ENCODE measurements at regions of chr1 and their contacts with region 1.

Region 1: GRCh38 chr1:39408641-39409054 is 82.8 kb upstream of the BMP8A start:
- DNase-seq: peak; percentile 89
- ATAC-seq: peak; percentile 79
- H3K4me3 Mint-ChIP-seq: peak overlapping the region; percentile 80
- H3K27ac Mint-ChIP-seq: no peak overlapping the region
- H3K4me1 Mint-ChIP-seq: peaks cover 63% of the 10 kb centered on the region
- H3K27me3 Mint-ChIP-seq: no peaks in the 10 kb centered on the region

Region 2: DNA sequence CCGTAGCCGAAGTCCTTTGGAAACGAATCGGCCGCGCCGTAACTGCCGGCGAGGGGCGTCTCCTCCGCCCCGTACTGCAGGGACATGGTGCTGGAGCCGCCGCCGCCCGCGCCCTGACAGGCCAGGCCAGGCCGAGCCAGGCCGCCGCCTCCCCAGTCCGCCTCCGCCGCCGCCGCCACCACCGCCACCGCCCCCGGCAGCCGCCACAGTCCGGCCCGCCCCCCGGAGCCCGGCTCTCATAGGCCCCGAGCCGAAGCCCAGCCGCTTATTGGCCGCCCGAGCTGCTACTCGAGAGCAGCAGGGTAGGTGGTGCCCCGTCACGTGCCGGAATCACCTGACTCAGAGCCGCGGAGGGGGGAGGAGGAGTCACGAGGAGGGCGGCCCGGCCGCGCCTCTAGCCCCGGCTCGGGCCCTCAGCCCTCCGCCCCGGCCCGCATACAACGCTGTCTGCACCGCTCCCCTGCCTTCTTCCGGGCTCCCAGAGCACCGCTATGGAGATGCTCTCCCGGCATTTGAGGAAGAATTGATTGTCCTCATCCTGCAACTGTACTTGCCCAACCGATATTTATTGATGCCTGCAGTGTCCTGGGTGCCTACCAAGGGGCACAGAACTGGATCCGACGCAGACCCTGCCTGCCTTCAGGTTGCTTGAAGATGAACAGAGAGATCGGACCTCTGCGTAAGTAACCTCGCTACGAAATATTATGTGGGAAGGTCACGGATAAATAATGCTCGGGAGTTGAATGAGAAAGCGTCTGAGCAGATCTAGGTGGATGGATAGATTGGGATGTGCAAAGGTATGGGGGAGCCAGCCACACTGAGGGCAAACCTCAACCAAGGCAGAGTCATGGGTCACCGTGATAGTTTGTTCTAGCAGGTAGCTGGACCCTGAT is 548.8 kb before region 1 on chr1 and contains the start of gene RRAGC:
- CTCF ChIA-PET with region 1: no interaction called
- POLR2A ChIA-PET with region 1: no interaction called
- intact Hi-C with region 1: loop called in 1 of 2 experiments (anchors 5 kb)
- DNase-seq: peak; percentile 99
- ATAC-seq: peak; percentile 98
- H3K4me3 Mint-ChIP-seq: peak within 1 kb of the TSS; percentile 98
- H3K27ac Mint-ChIP-seq: peak within 1 kb of the TSS; percentile 91
- H3K4me1 Mint-ChIP-seq: peaks cover 58% of the 10 kb centered on the region
- H3K27me3 Mint-ChIP-seq: no peaks in the 10 kb centered on the region
- total RNA-seq, gene RRAGC: 15.8 to 19.0 TPM

Region 3: DNA sequence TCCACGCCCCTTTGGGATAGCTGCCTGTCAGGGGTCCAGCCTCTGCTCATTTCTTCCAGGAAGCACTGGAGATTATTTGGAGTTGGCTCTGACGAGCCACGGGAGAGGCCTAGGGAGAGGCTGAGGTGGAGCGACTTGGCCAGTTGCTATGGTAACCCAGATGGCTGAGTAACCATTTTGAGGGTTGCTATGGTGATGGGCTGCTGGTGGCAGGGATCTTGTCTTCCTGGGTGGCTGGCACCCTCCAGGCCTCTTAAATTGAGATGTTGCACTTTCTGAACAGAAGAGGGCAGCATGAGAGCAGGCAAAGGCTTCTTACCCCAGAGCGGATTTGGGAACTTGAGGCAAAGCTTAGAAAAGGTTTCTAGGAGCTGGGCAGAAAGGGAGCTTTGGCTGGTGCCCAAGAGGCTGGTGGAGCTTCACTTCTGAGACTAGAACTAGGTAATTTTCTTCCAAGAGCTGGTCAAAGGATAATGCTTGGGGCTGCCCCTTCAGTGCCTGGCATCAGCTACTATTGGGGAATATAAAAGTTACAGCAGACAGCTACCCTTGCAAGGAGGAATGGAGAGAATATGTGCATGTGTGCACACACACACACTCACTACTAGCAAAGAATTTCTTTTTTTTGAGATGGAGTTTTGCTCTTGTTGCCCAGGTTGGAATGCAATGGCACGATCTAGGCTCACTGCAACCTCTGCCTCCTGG is 309.9 kb before region 1 on chr1:
- CTCF ChIA-PET with region 1: interaction called, 28 read pairs
- POLR2A ChIA-PET with region 1: no interaction called
- intact Hi-C with region 1: loop called (anchors 1 to 5 kb)
- DNase-seq: peak; percentile 77
- ATAC-seq: peak; percentile 88
- H3K4me3 Mint-ChIP-seq: no peak overlapping the region
- H3K27ac Mint-ChIP-seq: no peak overlapping the region
- H3K4me1 Mint-ChIP-seq: peaks cover 22% of the 10 kb centered on the region
- H3K27me3 Mint-ChIP-seq: peaks cover 2% of the 10 kb centered on the region

Region 4: GRCh38 chr1:39189592-39190041 is 219.0 kb before region 1 on chr1:
- CTCF ChIA-PET with region 1: interaction called, 6 read pairs
- POLR2A ChIA-PET with region 1: interaction called, 4 read pairs
- intact Hi-C with region 1: loop called in 1 of 2 experiments (anchors 5 kb)
- DNase-seq: no peak
- ATAC-seq: no peak
- H3K4me3 Mint-ChIP-seq: no peak overlapping the region
- H3K27ac Mint-ChIP-seq: peak overlapping the region; percentile 91
- H3K4me1 Mint-ChIP-seq: peaks cover 90% of the 10 kb centered on the region
- H3K27me3 Mint-ChIP-seq: no peaks in the 10 kb centered on the region

Region 5: GRCh38 chr1:39344394-39345154 is 64.1 kb before region 1 on chr1:
- CTCF ChIA-PET with region 1: no interaction called
- POLR2A ChIA-PET with region 1: no interaction called
- intact Hi-C with region 1: no loop called
- DNase-seq: no peak
- ATAC-seq: no peak
- H3K4me3 Mint-ChIP-seq: no peak overlapping the region
- H3K27ac Mint-ChIP-seq: no peak overlapping the region
- H3K4me1 Mint-ChIP-seq: no peaks in the 10 kb centered on the region
- H3K27me3 Mint-ChIP-seq: no peaks in the 10 kb centered on the region

Region 6: GRCh38 chr1:39398278-39399021 is 10.2 kb before region 1 on chr1:
- CTCF ChIA-PET with region 1: interaction called, 75 read pairs
- POLR2A ChIA-PET with region 1: interaction called, 4 read pairs
- intact Hi-C with region 1: loop called (anchors 1 to 2 kb)
- DNase-seq: peak; percentile 58
- ATAC-seq: peak; percentile 82
- H3K4me3 Mint-ChIP-seq: peak overlapping the region; percentile 34
- H3K27ac Mint-ChIP-seq: peak overlapping the region; percentile 82
- H3K4me1 Mint-ChIP-seq: peaks cover 60% of the 10 kb centered on the region
- H3K27me3 Mint-ChIP-seq: no peaks in the 10 kb centered on the region

Region 7: DNA sequence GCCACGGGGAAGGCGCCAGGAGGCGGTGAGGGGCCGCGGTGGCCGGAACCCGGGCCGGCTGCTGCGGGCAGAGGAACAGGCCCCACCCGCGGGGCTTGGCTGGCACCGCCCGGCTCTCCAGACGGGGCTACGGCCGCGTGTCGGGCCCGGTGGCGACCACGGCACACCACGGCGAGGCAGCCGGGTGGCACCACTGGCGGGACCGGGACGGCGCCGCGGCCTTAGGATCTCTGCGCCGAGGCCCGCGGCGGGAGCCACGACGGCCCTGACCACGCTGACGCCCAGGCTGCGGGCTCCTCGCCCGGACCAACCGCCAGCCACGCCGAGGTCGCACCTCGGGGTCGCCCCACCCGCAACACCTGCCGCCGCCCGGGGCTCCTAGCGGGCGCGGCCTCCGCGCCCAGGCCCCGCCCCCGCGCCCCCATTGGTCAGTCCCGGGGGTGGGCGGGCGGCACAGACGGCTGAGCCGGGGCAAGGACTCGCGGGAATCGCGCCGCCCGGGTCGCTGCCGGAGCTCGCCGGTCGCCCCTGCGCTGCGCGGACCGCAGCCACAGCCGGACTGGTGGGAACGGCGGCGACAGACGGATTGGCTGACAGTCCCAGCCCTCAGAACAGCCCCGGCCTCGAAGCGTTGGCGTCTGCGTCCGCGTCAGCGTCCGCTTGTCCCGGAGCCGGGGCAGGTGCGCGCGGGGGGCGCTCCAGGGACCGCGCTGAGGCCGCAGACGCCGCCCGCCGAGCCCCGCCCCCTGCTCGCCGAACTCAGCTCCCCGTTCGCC is 82.7 kb after region 1 on chr1 and contains the start of gene BMP8A:
- CTCF ChIA-PET with region 1: no interaction called
- POLR2A ChIA-PET with region 1: no interaction called
- intact Hi-C with region 1: loop called in 1 of 2 experiments (anchors 1 kb)
- DNase-seq: peak; percentile 83
- ATAC-seq: peak; percentile 92
- H3K4me3 Mint-ChIP-seq: peak within 1 kb of the TSS; percentile 43
- H3K27ac Mint-ChIP-seq: no peak within 1 kb of the TSS
- H3K4me1 Mint-ChIP-seq: peaks cover 4% of the 10 kb centered on the region
- H3K27me3 Mint-ChIP-seq: peaks cover 16% of the 10 kb centered on the region
- total RNA-seq, gene BMP8A: 0.16 TPM in 1 of 2 experiments, not detected in the other

Region 8: DNA sequence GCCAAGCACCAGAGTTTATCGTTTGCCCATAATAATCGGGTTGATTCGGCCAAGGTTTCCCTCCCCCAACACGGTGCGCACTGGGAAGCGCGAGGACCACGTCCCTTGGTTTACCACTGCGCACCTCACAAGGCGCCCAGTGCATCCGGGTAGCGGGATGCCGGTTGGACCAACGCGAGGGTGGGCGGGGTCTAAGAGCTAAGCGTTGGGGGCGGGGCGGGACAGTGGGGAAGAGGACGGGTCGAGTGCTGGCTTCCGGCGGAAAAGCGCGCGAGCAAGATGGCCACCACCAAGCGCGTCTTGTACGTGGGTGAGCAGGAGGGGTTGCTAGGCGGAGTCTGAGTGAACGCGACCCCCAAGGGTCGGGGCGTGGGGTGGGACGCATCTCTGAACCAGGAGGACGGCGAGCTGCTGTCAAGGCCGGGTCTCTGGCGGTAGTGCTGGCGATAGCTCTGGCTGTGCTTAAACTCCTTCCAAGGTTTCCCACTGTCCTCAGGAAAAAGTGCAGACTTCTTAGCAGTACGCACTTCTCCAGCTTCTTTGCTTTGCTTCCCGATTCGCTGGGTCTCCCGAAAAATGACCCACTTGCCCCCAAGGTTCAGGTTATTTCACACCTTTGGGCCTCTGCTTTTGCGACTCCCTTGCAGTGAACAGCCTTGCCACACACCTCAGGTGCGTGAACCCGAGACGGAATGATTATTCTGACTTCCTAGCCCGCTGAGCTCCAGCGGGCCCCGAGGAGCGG is 330.1 kb after region 1 on chr1 and contains the start of gene PPIE:
- CTCF ChIA-PET with region 1: no interaction called
- POLR2A ChIA-PET with region 1: no interaction called
- intact Hi-C with region 1: loop called in 1 of 2 experiments (anchors 2 kb)
- DNase-seq: peak; percentile 99
- ATAC-seq: peak; percentile 98
- H3K4me3 Mint-ChIP-seq: peak within 1 kb of the TSS; percentile 96
- H3K27ac Mint-ChIP-seq: peak within 1 kb of the TSS; percentile 94
- H3K4me1 Mint-ChIP-seq: peaks cover 36% of the 10 kb centered on the region
- H3K27me3 Mint-ChIP-seq: peaks cover 7% of the 10 kb centered on the region
- total RNA-seq, gene PPIE: 55.3 to 70.4 TPM